K562 (cell line): ENCODE measurements at regions of chr1 and their contacts with region 1.

Region 1: GRCh38 chr1:52569449-52570210 is 16.7 kb upstream of the TUT4 start:
- DNase-seq: no peak
- ATAC-seq: no peak
- H3K4me3 ChIP-seq: no peak overlapping the region
- H3K27ac ChIP-seq: no peak overlapping the region
- H3K4me1 ChIP-seq: peaks cover 5 to 6% of the 10 kb centered on the region in 2 experiments; a peak in 1 of 5 replicates
- H3K27me3 ChIP-seq: no peaks in the 10 kb centered on the region
- CTCF ChIP-seq: no peak
- EP300 ChIP-seq: no peak
- POLR2A ChIP-seq: no peak
- RAD21 ChIP-seq: no peak

Region 2: GRCh38 chr1:52558941-52559340 is 10.7 kb before region 1 on chr1:
- CTCF ChIA-PET with region 1: no interaction called
- POLR2A ChIA-PET with region 1: interaction called, 15 read pairs
- in situ Hi-C with region 1: no loop called
- intact Hi-C with region 1: no loop called
- DNase-seq: no peak
- ATAC-seq: no peak
- H3K4me3 ChIP-seq: no peak overlapping the region
- H3K27ac ChIP-seq: no peak overlapping the region
- H3K4me1 ChIP-seq: peaks cover under 1 to 10% of the 10 kb centered on the region in 2 experiments; a peak in 4 of 5 replicates
- H3K27me3 ChIP-seq: no peaks in the 10 kb centered on the region
- CTCF ChIP-seq: no peak
- EP300 ChIP-seq: no peak
- POLR2A ChIP-seq: no peak
- RAD21 ChIP-seq: no peak

Region 3: GRCh38 chr1:52686830-52687229 is 117.2 kb after region 1 on chr1:
- CTCF ChIA-PET with region 1: no interaction called
- POLR2A ChIA-PET with region 1: no interaction called
- in situ Hi-C with region 1: no loop called
- intact Hi-C with region 1: no loop called
- DNase-seq: no peak
- ATAC-seq: no peak
- H3K4me3 ChIP-seq: no peak overlapping the region
- H3K27ac ChIP-seq: no peak overlapping the region
- H3K4me1 ChIP-seq: no peaks in the 10 kb centered on the region; a peak in 1 of 5 replicates
- H3K27me3 ChIP-seq: no peaks in the 10 kb centered on the region; a peak in 1 of 5 replicates
- CTCF ChIP-seq: no peak
- EP300 ChIP-seq: no peak
- POLR2A ChIP-seq: no peak
- RAD21 ChIP-seq: no peak